Transverse colon (tissue), 4 donors: ENCODE measurements at regions of chr11 and their contacts with region 1.

Region 1: DNA sequence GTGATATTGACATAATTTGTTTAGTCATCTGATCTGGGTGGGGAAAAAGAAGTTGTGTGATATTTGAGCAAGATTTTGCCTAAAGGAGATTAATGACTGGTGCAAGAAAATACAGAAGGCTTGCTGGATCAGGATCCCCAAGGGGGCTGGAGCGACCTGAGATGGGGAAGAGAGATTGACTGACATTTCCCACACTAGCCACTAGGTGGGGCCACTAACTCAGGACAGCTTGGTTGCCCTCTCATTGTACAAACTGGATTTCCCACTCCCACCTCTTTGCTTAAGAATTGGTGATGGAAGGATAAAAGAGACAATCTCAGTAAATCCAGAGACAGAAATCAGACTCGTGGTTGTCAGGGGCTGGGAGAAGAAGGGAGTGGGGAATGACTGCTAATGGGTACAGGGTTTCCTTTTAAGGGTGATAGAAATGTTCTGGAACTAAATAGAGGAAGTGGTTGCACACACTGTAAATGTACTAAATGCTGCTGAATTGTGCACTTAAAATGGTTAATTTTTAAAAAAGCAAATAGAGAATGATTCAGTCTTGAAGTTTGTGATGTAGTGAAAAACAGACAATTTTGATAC is 50.7 kb downstream of the CTTN start:
- DNase-seq: no peak
- H3K4me3 ChIP-seq: no peak overlapping the region
- H3K27ac ChIP-seq: no peak overlapping the region
- H3K4me1 ChIP-seq: no peaks in the 10 kb centered on the region
- H3K27me3 ChIP-seq: no peaks in the 10 kb centered on the region
- CTCF ChIP-seq: no peak
- EP300 ChIP-seq: no peak
- POLR2A ChIP-seq: no peak

Region 2: GRCh38 chr11:70247464-70248255 is 201.4 kb before region 1 on chr11:
- in situ Hi-C with region 1: no loop called
- intact Hi-C with region 1: no loop called
- DNase-seq: no peak
- H3K4me3 ChIP-seq: no peak overlapping the region
- H3K27ac ChIP-seq: no peak overlapping the region
- H3K4me1 ChIP-seq: no peaks in the 10 kb centered on the region
- H3K27me3 ChIP-seq: no peaks in the 10 kb centered on the region
- CTCF ChIP-seq: no peak
- EP300 ChIP-seq: no peak
- POLR2A ChIP-seq: no peak

Region 3: GRCh38 chr11:70423523-70424505 is 25.3 kb before region 1 on chr11:
- in situ Hi-C with region 1: no loop called
- intact Hi-C with region 1: loop called (anchors 1 kb)
- DNase-seq: no peak
- H3K4me3 ChIP-seq: no peak overlapping the region
- H3K27ac ChIP-seq: no peak overlapping the region
- H3K4me1 ChIP-seq: no peaks in the 10 kb centered on the region
- H3K27me3 ChIP-seq: no peaks in the 10 kb centered on the region
- CTCF ChIP-seq: no peak
- EP300 ChIP-seq: no peak
- POLR2A ChIP-seq: no peak

Region 4: GRCh38 chr11:70503458-70504221 is 54.6 kb after region 1 on chr11:
- in situ Hi-C with region 1: no loop called
- intact Hi-C with region 1: no loop called
- DNase-seq: peak; percentile 21
- H3K4me3 ChIP-seq: no peak overlapping the region
- H3K27ac ChIP-seq: no peak overlapping the region
- H3K4me1 ChIP-seq: no peaks in the 10 kb centered on the region
- H3K27me3 ChIP-seq: no peaks in the 10 kb centered on the region
- CTCF ChIP-seq: peak in 2 of 5 experiments; percentile 15 to 29
- EP300 ChIP-seq: no peak
- POLR2A ChIP-seq: no peak